Transverse colon (tissue), 4 donors: ENCODE measurements at regions of chr3 and their contacts with region 1.

Region 1: GRCh38 chr3:65569845-65570405 is 468.8 kb downstream of the MAGI1 start:
- DNase-seq: no peak
- H3K4me3 ChIP-seq: no peak overlapping the region
- H3K27ac ChIP-seq: no peak overlapping the region
- H3K4me1 ChIP-seq: peaks cover 0 to 4% (median 0%) of the 10 kb centered on the region in 4 donors
- H3K27me3 ChIP-seq: no peaks in the 10 kb centered on the region
- CTCF ChIP-seq: no peak
- EP300 ChIP-seq: no peak
- POLR2A ChIP-seq: no peak

Region 2: DNA sequence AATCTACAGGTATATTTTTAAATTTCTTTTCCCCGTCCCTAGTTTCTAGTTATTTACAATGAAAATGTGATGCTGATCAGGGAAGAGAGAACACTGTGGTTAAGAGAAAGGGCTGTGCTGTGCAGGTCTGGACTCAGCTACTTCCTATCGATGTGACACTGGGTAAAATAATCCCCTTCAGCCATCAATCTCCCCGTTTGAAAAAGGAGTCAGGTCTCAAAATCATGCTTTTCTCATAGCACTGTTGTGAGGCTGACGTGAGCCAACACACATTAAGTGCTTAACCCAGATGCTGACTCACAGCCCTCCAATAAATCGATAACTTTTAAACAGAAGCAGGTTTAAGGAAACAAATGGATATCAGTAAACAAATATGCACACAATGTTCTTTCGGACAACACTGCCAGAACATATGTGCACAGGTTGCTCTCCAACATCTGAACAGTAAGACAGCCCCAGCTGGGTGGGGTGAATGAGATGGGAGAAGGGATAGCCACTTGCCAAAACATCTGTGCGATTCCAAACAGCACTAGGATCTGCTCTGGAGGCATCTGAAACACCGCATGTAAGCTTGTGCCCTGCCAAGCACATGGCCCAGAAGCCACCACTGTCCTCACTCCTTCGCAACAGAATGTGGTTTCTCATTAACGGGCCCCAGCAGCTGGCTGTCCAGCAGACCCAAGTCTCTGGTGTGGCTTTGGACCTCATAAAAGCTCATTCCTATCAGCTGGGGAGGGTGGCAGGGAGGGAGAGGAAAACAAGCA is 1201.5 kb before region 1 on chr3:
- in situ Hi-C with region 1: no loop called
- intact Hi-C with region 1: loop called (anchors 5 kb)
- DNase-seq: no peak
- H3K4me3 ChIP-seq: no peak overlapping the region
- H3K27ac ChIP-seq: no peak overlapping the region
- H3K4me1 ChIP-seq: no peaks in the 10 kb centered on the region
- H3K27me3 ChIP-seq: no peaks in the 10 kb centered on the region
- CTCF ChIP-seq: no peak
- EP300 ChIP-seq: no peak
- POLR2A ChIP-seq: no peak

Region 3: GRCh38 chr3:65422154-65422553 is 147.8 kb before region 1 on chr3:
- in situ Hi-C with region 1: no loop called
- intact Hi-C with region 1: no loop called
- DNase-seq: no peak
- H3K4me3 ChIP-seq: no peak overlapping the region
- H3K27ac ChIP-seq: no peak overlapping the region
- H3K4me1 ChIP-seq: no peaks in the 10 kb centered on the region
- H3K27me3 ChIP-seq: no peaks in the 10 kb centered on the region
- CTCF ChIP-seq: no peak
- EP300 ChIP-seq: no peak
- POLR2A ChIP-seq: no peak